ENCODE measurements at regions of chr10 and their contacts with region 1.

Region 1: GRCh38 chr10:75788394-75789205 is 357.2 kb downstream of the LRMDA start:
- DNase-seq: no peak
- H3K4me3 ChIP-seq: no peak overlapping the region
- H3K4me3 Mint-ChIP-seq: no peak overlapping the region
- H3K27ac Mint-ChIP-seq: peak overlapping the region; percentile 55
- H3K4me1 ChIP-seq: peaks cover 12% of the 10 kb centered on the region
- H3K4me1 Mint-ChIP-seq: peaks cover 30% of the 10 kb centered on the region
- H3K27me3 ChIP-seq: no peaks in the 10 kb centered on the region
- H3K27me3 Mint-ChIP-seq: no peaks in the 10 kb centered on the region
- CTCF ChIP-seq: no peak

Region 2: DNA sequence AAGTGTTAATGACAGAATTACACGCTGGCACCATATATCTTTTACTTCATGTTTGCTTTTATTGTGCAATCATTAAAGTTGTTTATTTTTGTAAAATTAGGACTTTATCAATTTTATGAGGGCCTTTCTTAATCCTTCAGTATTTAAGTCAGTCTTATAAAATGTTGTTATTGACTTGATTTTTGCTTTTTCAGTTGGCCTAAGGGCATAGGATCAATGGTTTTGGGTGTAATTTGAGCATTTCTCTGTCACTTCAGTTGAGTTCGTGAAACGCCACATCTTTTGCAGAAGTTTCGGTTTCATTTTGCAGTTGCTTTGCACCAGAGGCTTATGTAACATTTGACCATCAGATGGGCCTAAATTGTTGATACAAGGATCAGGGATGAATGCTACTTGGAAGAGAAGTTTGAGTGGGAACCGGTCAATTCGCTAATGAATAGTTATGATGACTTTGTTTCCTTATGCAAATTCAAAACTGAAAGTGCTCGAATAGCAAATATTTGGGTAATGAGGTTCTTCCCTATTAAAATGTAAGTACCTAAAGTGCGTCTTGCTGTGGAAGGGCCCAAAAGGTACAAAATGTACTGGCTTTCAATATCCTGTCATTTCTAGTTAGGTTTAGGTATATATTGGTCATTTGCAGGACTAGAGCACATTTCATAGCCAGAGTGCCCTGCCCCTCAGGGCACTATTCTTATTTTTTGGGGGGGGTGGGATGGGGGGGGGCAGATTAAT is 16.3 kb before region 1 on chr10:
- CTCF ChIA-PET with region 1: no interaction called
- POLR2A ChIA-PET with region 1: interaction called, 10 read pairs
- intact Hi-C with region 1: no loop called
- DNase-seq: no peak
- H3K4me3 ChIP-seq: no peak overlapping the region
- H3K4me3 Mint-ChIP-seq: no peak overlapping the region
- H3K27ac Mint-ChIP-seq: no peak overlapping the region
- H3K4me1 ChIP-seq: peaks cover 21% of the 10 kb centered on the region; the same call in 1 of the 2 replicates
- H3K4me1 Mint-ChIP-seq: peaks cover 25% of the 10 kb centered on the region
- H3K27me3 ChIP-seq: no peaks in the 10 kb centered on the region
- H3K27me3 Mint-ChIP-seq: no peaks in the 10 kb centered on the region
- CTCF ChIP-seq: no peak